Head of caudate nucleus (tissue), 42 donors: ENCODE measurements at regions of chr6 and their contacts with region 1.

Region 1: DNA sequence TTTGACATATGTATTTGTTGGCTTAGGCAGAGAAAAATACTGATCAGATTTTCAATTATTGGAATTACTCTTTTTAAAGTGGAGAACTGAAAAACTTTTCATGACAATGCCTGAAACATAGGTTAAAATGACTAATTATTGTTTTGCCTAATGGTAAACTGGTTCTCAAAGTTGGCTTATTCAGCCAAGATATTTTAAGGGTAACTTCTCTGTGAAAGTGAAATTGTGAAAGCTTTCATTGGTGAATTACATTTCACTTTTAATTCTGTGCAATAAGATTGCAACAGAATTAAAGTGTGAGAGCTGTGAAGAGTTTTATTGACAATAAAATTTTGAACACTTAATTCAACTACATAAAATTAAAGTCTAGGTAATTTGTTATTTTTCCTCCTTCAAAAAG is 24.5 kb downstream of the KIAA0408 start:
- DNase-seq: no peak

Region 2: DNA sequence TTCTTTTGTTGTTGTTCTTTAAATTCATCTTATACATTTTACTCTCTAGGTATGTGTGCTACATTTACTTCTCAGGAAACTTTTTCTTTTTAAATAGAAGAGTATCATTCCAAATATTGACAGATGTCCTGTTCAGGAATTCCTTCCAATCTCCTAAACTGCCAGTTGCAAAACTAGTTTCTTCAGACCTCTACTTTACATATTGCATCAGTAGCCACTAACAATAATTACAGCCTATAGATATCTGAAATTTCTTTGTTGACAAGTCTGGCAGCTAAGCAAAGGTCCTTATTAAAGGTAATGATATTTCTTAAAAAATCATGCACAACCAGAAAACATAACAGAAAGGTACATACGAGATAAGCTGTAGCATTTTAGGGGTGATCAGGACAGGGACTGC is 95.7 kb before region 1 on chr6:
- intact Hi-C with region 1: loop called (anchors 5 kb)
- DNase-seq: no peak